Lower lobe of right lung (tissue), 2 donors: ENCODE measurements at regions of chr3 and their contacts with region 1.

Region 1: DNA sequence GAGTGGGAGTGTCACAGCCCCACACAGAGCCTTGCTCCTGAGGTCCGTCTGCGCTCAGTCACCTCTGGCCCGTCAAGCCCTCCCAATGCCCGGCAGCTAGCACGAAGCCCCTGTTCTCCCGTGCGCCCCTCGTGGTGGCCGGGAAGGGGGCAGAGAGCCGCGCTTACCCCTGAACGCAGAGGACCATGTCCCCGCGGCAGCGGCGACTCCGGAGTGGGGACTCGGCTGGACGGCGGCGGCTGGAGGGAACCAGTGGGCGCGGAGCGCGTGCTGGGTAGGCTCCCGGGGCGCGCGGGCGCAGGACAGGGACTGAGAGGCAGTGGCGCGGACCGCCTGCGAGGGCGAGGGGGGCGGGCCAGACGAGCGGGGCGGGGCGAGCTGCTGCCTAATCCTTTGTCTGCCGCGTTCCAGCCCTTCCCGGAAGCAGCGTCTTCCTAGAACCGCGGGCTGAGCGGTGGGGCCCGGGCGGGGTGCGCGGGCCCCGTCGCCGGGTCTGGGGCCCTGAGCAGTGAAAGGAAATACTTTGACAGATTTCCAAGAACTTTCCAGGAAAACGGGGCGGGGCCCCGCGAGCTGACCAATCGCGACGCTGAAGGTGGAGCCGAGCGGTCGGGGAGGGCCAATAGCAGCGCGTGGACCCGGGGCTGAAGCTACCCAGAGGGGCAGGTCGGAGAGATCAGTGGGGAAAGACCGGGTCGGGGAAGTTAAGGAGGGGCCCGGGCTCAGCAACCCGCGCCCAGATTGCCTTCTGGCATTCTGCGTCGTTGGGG is at the start of gene CISH:
- DNase-seq: peak; percentile 98
- ATAC-seq: peak; percentile 86 to 89
- H3K4me3 ChIP-seq: peak within 1 kb of the TSS; percentile 83
- H3K27ac ChIP-seq: peak within 1 kb of the TSS; percentile 91
- H3K4me1 ChIP-seq: peaks cover 76% of the 10 kb centered on the region
- H3K27me3 ChIP-seq: no peaks in the 10 kb centered on the region
- CTCF ChIP-seq: peak; percentile 73
- total RNA-seq, gene CISH: 48.8 TPM

Region 2: GRCh38 chr3:50299929-50300685 is 311.5 kb before region 1 on chr3:
- intact Hi-C with region 1: no loop called
- DNase-seq: peak; percentile 68
- ATAC-seq: peak; percentile 2 to 25
- H3K4me3 ChIP-seq: peak overlapping the region; percentile 75
- H3K27ac ChIP-seq: peak overlapping the region; percentile 88
- H3K4me1 ChIP-seq: peaks cover 55% of the 10 kb centered on the region
- H3K27me3 ChIP-seq: no peaks in the 10 kb centered on the region
- CTCF ChIP-seq: no peak

Region 3: DNA sequence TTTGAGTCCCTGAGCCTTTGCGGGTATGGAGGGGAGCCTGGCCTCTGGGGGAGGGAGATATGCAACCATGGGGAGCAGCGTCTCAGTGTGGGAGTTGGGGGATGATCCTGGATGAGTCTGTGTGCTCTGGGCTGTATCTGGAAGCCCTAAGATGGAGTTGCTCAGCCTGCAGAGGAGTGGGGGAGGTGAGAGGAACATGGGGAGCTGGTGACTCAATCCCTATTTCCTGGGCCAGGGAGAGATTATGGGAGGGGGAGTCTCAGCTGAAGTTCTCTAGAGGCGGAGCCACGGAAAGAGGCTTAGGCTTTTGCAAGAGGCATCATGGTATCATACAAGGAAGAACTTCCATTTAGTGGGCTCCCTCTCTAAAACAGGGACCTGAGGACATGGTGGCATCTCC is 192.8 kb before region 1 on chr3:
- intact Hi-C with region 1: no loop called
- DNase-seq: no peak
- ATAC-seq: no peak
- H3K4me3 ChIP-seq: no peak overlapping the region
- H3K27ac ChIP-seq: no peak overlapping the region
- H3K4me1 ChIP-seq: peaks cover 9% of the 10 kb centered on the region
- H3K27me3 ChIP-seq: no peaks in the 10 kb centered on the region
- CTCF ChIP-seq: no peak

Region 4: DNA sequence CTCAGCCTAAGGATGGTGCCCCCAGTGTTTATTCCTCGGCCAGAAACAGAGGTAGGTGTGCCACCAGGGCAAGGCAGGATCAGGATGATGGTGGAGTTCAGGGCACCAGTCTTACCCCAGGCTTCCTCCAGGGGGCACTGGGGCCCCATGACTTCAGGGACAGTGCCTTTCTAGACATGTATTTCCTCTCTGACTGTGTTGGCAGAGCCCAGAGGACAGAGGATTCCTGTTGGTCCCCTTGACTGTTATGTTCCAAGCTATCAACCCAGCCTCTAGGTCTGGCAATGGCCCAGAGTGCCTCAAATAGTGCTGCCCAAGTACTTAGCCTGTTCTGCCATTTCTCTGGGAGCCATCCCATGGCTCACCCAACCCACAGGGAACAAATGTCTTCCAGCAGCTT is 39.5 kb before region 1 on chr3:
- intact Hi-C with region 1: loop called (anchors 5 kb)
- DNase-seq: peak; percentile 82
- ATAC-seq: peak; percentile 50
- H3K4me3 ChIP-seq: no peak overlapping the region
- H3K27ac ChIP-seq: peak overlapping the region; percentile 60
- H3K4me1 ChIP-seq: peaks cover 46% of the 10 kb centered on the region
- H3K27me3 ChIP-seq: no peaks in the 10 kb centered on the region
- CTCF ChIP-seq: peak; percentile 94